A673 (cell line): ENCODE measurements at regions of chr6 and their contacts with region 1.

Region 1: GRCh38 chr6:101393251-101393828 is at the start of gene GRIK2:
- DNase-seq: peak; percentile 81
- H3K4me3 ChIP-seq: peak within 1 kb of the TSS; percentile 75
- H3K27ac ChIP-seq: peak within 1 kb of the TSS; percentile 71
- H3K4me1 ChIP-seq: peaks cover 13% of the 10 kb centered on the region
- H3K27me3 ChIP-seq: no peaks in the 10 kb centered on the region
- CTCF ChIP-seq: peak; percentile 45; the same call in 1 of the 2 replicates
- total RNA-seq, gene GRIK2: 62.1 and 65.6 TPM in 2 replicates

Region 2: GRCh38 chr6:99629293-99629692 is 1764.0 kb before region 1 on chr6:
- CTCF ChIA-PET with region 1: no interaction called
- POLR2A ChIA-PET with region 1: no interaction called
- intact Hi-C with region 1: no loop called
- DNase-seq: no peak
- H3K4me3 ChIP-seq: no peak overlapping the region
- H3K27ac ChIP-seq: no peak overlapping the region
- H3K4me1 ChIP-seq: no peaks in the 10 kb centered on the region
- H3K27me3 ChIP-seq: peaks cover 28% of the 10 kb centered on the region
- CTCF ChIP-seq: no peak

Region 3: DNA sequence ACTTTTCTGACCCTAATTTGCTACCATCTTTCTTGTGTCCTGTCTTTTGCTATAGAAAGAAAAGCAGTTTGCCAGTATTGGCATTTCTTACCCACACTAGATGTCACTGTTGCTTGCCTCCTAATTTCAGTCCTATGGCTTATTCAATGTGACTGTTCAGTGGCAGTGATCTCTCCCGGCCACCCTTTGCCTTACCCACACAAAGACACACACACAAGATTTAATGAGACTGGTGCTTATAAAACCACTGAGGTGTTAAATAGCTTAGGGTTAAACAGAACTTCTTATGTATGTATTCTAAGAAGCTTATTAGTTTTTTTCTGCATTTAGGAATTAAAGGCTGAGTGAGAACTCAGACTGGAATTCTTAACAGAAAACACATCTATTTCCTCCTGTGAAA is 278.6 kb before region 1 on chr6:
- CTCF ChIA-PET with region 1: no interaction called
- POLR2A ChIA-PET with region 1: no interaction called
- intact Hi-C with region 1: loop called (anchors 5 kb)
- DNase-seq: peak; percentile 90
- H3K4me3 ChIP-seq: peak overlapping the region; percentile 9
- H3K27ac ChIP-seq: no peak overlapping the region
- H3K4me1 ChIP-seq: peaks cover 60% of the 10 kb centered on the region
- H3K27me3 ChIP-seq: no peaks in the 10 kb centered on the region
- CTCF ChIP-seq: peak; percentile 84

Region 4: GRCh38 chr6:101759345-101759744 is 366.0 kb after region 1 on chr6:
- CTCF ChIA-PET with region 1: interaction called, 13 read pairs
- POLR2A ChIA-PET with region 1: no interaction called
- intact Hi-C with region 1: no loop called
- DNase-seq: peak; percentile 23
- H3K4me3 ChIP-seq: no peak overlapping the region
- H3K27ac ChIP-seq: no peak overlapping the region
- H3K4me1 ChIP-seq: peaks cover 7% of the 10 kb centered on the region
- H3K27me3 ChIP-seq: no peaks in the 10 kb centered on the region
- CTCF ChIP-seq: no peak; the same call in 1 of the 2 replicates